Activated CD8-positive, alpha-beta T cell treated with anti-CD3 and anti-CD28 coated beads, Interleukin-2, amount 10 ng/mL, durations not matched to agents 7 days and 5 days (primary cell): ENCODE measurements at regions of chr2 and their contacts with region 1.

Region 1: GRCh38 chr2:38665854-38666555 is at the start of gene GALM:
- DNase-seq: peak; percentile 73
- ATAC-seq: peak; percentile 45
- H3K4me3 Mint-ChIP-seq: peak within 1 kb of the TSS; percentile 82
- H3K27ac Mint-ChIP-seq: peak within 1 kb of the TSS; percentile 89
- H3K4me1 Mint-ChIP-seq: peaks cover 63% of the 10 kb centered on the region
- H3K27me3 Mint-ChIP-seq: no peaks in the 10 kb centered on the region
- total RNA-seq, gene GALM: 27.6 TPM

Region 2: GRCh38 chr2:38626326-38627035 is 39.5 kb before region 1 on chr2:
- CTCF ChIA-PET with region 1: interaction called, 4 read pairs
- POLR2A ChIA-PET with region 1: interaction called, 20 read pairs
- DNase-seq: peak; percentile 73
- ATAC-seq: peak; percentile 81
- H3K4me3 Mint-ChIP-seq: peak overlapping the region; percentile 13
- H3K27ac Mint-ChIP-seq: peak overlapping the region; percentile 54
- H3K4me1 Mint-ChIP-seq: peaks cover 32% of the 10 kb centered on the region
- H3K27me3 Mint-ChIP-seq: no peaks in the 10 kb centered on the region

Region 3: DNA sequence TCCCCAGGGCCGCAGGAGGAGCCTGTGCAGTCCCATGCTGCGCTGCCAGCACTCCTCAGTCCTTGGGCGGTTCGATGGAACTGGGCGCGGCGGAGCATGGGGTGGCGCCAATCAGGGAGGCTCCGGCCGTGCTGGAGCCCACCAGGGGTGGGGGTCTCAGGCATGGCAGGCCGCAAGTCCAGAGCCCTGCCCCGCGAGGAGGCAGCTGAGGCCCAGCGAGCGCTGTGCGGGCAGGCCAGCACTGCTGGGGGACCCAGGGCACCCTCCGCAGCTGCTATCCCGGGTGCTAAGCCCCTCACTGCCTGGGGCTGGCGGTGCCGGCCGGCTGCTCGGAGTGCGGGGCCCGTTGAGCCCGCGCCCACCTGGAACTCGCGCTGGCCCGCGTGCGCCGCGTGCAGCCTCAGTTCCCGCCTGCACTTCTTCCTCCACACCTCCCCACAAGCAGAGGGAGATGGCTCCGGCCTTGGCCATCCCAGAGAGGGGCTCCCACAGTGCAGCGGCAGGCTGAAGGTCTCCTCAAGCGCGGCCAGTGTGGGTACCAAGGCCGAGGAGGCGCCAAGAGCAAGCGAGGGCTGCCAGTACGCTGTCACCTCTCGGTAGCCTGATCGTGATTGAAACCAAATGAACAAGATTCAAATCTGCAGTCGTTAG is 22.9 kb before region 1 on chr2:
- CTCF ChIA-PET with region 1: interaction called, 11 read pairs
- POLR2A ChIA-PET with region 1: interaction called, 11 read pairs
- DNase-seq: no peak
- ATAC-seq: peak; percentile 17
- H3K4me3 Mint-ChIP-seq: no peak overlapping the region
- H3K27ac Mint-ChIP-seq: peak overlapping the region; percentile 92
- H3K4me1 Mint-ChIP-seq: peaks cover 40% of the 10 kb centered on the region
- H3K27me3 Mint-ChIP-seq: no peaks in the 10 kb centered on the region

Region 4: DNA sequence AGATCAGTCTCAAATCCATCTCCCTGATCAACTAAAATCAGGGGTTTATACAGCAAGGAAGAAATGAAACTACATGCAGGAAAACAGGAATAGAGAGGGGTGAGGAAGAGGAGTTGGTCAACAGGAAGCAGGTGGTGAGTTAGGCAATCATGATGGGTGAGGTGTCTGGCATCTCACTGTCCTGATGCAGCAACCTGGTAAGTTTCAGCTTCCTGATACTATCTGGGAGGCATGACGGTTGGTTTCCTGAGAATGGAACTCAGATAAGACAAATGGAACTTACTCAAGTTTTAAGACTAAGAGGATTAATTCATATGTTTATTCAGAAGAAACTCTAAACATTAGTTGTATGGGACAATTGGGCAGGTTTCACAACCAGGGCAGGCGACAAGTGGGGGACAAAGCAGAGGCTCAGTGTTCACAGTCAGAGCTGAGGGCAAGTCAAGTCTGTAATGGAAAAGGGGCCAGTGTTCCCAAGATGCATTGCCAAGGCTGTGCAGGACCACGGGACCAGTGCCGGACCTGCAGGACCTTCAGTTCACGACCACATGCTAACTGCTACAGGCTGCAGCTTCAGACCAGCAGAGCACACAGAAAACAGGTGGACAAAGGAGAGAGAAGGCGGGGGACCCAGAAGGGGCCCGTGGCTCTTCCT is 17.8 kb before region 1 on chr2:
- CTCF ChIA-PET with region 1: interaction called, 25 read pairs
- POLR2A ChIA-PET with region 1: interaction called, 73 read pairs
- DNase-seq: no peak
- ATAC-seq: no peak
- H3K4me3 Mint-ChIP-seq: no peak overlapping the region
- H3K27ac Mint-ChIP-seq: peak overlapping the region; percentile 64
- H3K4me1 Mint-ChIP-seq: peaks cover 65% of the 10 kb centered on the region
- H3K27me3 Mint-ChIP-seq: no peaks in the 10 kb centered on the region

Region 5: GRCh38 chr2:38653715-38654527 is 12.1 kb before region 1 on chr2:
- CTCF ChIA-PET with region 1: interaction called, 25 read pairs
- POLR2A ChIA-PET with region 1: interaction called, 73 read pairs
- DNase-seq: peak; percentile 58
- ATAC-seq: peak; percentile 61
- H3K4me3 Mint-ChIP-seq: peak overlapping the region; percentile 52
- H3K27ac Mint-ChIP-seq: peak overlapping the region; percentile 92
- H3K4me1 Mint-ChIP-seq: peaks cover 61% of the 10 kb centered on the region
- H3K27me3 Mint-ChIP-seq: no peaks in the 10 kb centered on the region

Region 6: DNA sequence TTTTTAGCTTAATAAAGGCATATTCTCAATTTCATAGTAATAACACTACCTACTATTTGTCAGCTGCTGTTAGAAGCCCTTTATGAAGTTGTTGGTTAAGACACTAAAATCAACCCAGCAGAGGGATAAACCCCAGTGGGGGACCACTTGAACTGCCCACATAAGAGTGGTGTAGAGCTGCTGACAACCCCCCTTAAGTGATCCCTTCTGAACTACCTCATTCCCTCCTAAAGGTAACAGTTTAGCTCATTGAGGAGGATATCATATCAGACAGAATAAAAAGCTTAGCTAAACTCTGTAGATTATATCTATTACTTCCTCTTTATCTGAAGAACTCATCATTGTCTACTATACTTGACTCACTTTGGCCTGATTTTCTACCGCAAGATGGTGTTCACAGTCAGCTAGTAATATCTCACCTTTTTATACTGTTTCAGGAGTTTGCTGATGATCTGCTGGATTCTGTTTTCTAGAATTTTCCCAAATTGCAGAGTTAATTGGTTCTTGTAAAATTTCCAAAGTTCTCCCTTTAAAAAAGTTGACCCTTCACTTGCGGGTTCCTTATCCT is 16.1 kb after region 1 on chr2:
- CTCF ChIA-PET with region 1: interaction called, 13 read pairs
- POLR2A ChIA-PET with region 1: interaction called, 7 read pairs
- DNase-seq: no peak
- ATAC-seq: peak; percentile 56
- H3K4me3 Mint-ChIP-seq: no peak overlapping the region
- H3K27ac Mint-ChIP-seq: peak overlapping the region; percentile 34
- H3K4me1 Mint-ChIP-seq: peaks cover 42% of the 10 kb centered on the region
- H3K27me3 Mint-ChIP-seq: no peaks in the 10 kb centered on the region

Region 7: GRCh38 chr2:38720613-38721241 is 54.7 kb after region 1 on chr2:
- CTCF ChIA-PET with region 1: interaction called, 12 read pairs
- POLR2A ChIA-PET with region 1: interaction called, 3 read pairs
- DNase-seq: no peak
- ATAC-seq: peak; percentile 17
- H3K4me3 Mint-ChIP-seq: no peak overlapping the region
- H3K27ac Mint-ChIP-seq: peak overlapping the region; percentile 37
- H3K4me1 Mint-ChIP-seq: peaks cover 33% of the 10 kb centered on the region
- H3K27me3 Mint-ChIP-seq: no peaks in the 10 kb centered on the region